ENCODE measurements at regions of chr11 and their contacts with region 1.

Region 1: DNA sequence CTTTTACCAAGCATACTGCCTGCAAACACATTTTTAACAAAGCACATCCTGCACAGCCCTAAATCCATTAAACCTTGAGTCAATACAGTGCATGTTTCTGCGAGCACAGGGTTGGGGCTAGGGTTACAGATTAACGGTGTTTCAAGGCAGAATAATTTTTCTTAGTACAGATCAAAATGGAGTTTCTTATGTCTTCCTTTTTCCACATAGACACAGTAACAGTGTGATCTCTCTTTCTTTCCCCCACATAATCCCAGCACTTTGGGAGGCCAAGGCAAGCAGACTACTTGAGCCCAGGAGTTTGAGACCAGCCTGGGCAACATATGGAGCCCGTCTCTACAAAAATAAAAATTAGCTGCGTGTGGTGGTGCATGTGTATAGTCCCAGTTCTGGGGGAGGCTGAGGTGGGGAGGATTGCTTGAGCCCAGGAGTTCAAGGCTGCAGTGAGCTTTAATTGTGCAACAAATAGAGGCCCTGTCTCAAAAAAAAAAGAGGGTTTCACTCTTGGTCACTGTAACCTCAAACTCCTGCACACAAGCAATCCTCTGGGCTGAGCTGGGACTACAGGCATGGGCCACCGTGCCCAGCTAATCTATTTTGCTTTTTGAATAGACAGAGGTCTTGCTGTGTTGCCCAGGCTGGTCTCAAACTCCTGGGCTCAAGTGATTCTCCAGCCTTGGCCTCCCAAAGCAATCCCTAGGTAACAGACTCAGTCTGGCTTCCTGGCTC is 19.7 kb upstream of the SLC3A2 start:
- DNase-seq: no peak
- ATAC-seq: peak; percentile 72
- H3K4me3 ChIP-seq: peak overlapping the region; percentile 28; the same call in 1 of the 2 replicates
- H3K27ac ChIP-seq: peak overlapping the region; percentile 61
- H3K4me1 ChIP-seq: peaks cover 23% of the 10 kb centered on the region
- H3K27me3 ChIP-seq: no peaks in the 10 kb centered on the region
- CTCF ChIP-seq: no peak
- EP300 ChIP-seq: no peak
- POLR2A ChIP-seq: no peak
- RAD21 ChIP-seq: no peak

Region 2: DNA sequence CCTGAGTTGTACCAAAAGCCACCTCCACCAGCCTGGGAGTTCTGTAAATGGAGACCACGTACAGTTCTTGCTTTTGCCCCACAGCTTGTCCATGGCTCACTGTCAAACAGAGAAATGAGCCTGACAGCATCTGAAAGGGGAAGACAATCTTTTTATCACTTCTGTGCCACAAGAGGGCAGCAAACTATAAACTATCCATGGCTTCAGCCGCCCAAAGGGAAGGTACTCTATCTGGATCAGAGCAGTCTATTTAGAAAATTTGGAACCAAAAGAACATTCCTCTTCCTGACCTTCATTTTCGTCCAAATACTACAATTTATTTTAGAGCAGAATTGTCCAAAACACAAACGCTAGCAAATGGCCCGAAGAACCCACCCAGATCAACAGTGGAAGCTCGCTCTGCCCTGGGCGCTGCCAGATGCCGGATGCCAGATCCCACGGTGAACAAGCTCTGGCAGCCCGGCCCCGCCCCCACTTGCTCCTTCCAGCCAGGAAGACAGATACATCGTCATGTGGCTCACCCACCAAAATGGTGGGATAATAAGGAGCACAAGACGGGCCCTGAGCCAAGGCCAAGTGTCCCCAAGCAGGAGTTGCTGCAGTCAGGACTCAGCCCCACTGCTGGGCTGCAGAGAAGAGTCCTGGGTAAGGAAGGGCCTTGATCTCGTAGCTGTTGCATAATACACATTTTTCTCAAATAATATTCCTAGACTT is 466.0 kb before region 1 on chr11:
- CTCF ChIA-PET with region 1: interaction called, 7 read pairs
- POLR2A ChIA-PET with region 1: no interaction called
- RAD21 ChIA-PET with region 1: no interaction called
- SMC1A ChIA-PET with region 1: interaction called, 7 read pairs
- in situ Hi-C with region 1: no loop called
- intact Hi-C with region 1: loop called (anchors 10 kb)
- DNase-seq: peak; percentile 28
- ATAC-seq: peak; percentile 97
- H3K4me3 ChIP-seq: no peak overlapping the region
- H3K27ac ChIP-seq: no peak overlapping the region
- H3K4me1 ChIP-seq: no peaks in the 10 kb centered on the region
- H3K27me3 ChIP-seq: no peaks in the 10 kb centered on the region
- CTCF ChIP-seq: peak; percentile 51 to 82 (median 68); a peak in 5 of 6 replicates
- EP300 ChIP-seq: no peak
- POLR2A ChIP-seq: no peak
- RAD21 ChIP-seq: peak; percentile 86

Region 3: GRCh38 chr11:62671575-62672389 is 189.2 kb before region 1 on chr11 and contains the starts of genes LBHD1 and UQCC3:
- CTCF ChIA-PET with region 1: interaction called, 3 read pairs
- POLR2A ChIA-PET with region 1: interaction called, 6 read pairs
- RAD21 ChIA-PET with region 1: no interaction called
- SMC1A ChIA-PET with region 1: interaction called, 4 read pairs
- in situ Hi-C with region 1: no loop called
- intact Hi-C with region 1: loop called (anchors 5 kb)
- DNase-seq: no peak
- ATAC-seq: peak; percentile 89
- H3K4me3 ChIP-seq: peak within 1 kb of the TSS; percentile 88
- H3K27ac ChIP-seq: peak within 1 kb of the TSS; percentile 75
- H3K4me1 ChIP-seq: peaks cover 19% of the 10 kb centered on the region
- H3K27me3 ChIP-seq: no peaks in the 10 kb centered on the region
- CTCF ChIP-seq: no peak
- EP300 ChIP-seq: no peak
- POLR2A ChIP-seq: peak; percentile 82
- RAD21 ChIP-seq: no peak
- polyA plus RNA-seq, gene LBHD1: 0.79 to 2.4 TPM
- polyA plus RNA-seq, gene UQCC3: 2.0 to 4.6 TPM

Region 4: DNA sequence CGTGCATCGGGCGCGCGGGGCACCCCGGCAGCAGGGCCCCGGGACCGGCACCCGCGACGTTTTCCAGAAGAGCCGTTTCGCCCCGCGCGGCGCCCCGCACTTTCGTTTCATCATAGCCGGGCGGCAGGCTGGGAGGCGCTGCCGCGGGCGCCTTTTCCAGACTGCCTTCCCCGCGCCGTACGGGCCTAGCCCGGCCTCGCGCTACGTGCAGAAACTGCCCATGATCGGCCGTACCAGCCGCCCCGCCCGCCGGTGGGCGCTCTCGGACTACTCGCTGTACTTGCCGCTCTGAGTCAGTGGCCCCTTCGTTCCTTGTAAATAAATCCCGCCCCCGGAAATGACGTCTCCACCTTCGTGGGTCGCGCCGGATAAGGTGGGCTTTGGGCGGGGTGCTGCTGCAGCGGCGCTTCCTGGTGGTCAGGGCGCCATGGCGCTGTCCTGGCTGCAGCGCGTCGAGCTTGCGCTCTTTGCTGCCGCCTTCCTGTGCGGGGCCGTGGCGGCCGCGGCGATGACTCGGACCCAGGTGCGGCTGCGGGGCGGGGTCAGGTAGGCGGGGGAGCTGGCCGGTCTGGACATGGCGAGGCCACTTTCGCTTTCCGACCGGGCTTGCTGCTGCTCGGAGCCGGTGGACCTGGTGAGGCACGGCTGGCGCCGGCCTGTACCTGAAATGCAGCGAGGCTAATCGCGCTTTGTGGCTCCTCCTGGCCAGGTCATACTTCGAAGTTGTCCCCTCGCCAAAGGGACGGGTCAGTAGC is 73.8 kb before region 1 on chr11 and contains the start of gene TMEM179B:
- CTCF ChIA-PET with region 1: interaction called, 131 read pairs
- POLR2A ChIA-PET with region 1: interaction called, 53 read pairs
- RAD21 ChIA-PET with region 1: interaction called, 57 read pairs
- SMC1A ChIA-PET with region 1: interaction called, 33 read pairs
- in situ Hi-C with region 1: no loop called
- intact Hi-C with region 1: loop called (anchors 1 kb)
- DNase-seq: peak; percentile 88
- ATAC-seq: peak; percentile 80
- H3K4me3 ChIP-seq: peak within 1 kb of the TSS; percentile 95
- H3K27ac ChIP-seq: peak within 1 kb of the TSS; percentile 64
- H3K4me1 ChIP-seq: peaks cover 7% of the 10 kb centered on the region
- H3K27me3 ChIP-seq: no peaks in the 10 kb centered on the region
- CTCF ChIP-seq: peak; percentile 65 to 75 (median 74)
- EP300 ChIP-seq: no peak
- POLR2A ChIP-seq: peak; percentile 99
- RAD21 ChIP-seq: peak; percentile 58
- polyA plus RNA-seq, gene TMEM179B: 57.8 to 62.8 TPM

Region 5: GRCh38 chr11:62875698-62876478 is 14.9 kb after region 1 on chr11:
- CTCF ChIA-PET with region 1: interaction called, 38 read pairs
- POLR2A ChIA-PET with region 1: interaction called, 41 read pairs
- RAD21 ChIA-PET with region 1: interaction called, 13 read pairs
- SMC1A ChIA-PET with region 1: interaction called, 8 read pairs
- in situ Hi-C with region 1: no loop called
- intact Hi-C with region 1: no loop called
- DNase-seq: no peak
- ATAC-seq: no peak
- H3K4me3 ChIP-seq: no peak overlapping the region
- H3K27ac ChIP-seq: no peak overlapping the region
- H3K4me1 ChIP-seq: peaks cover 12% of the 10 kb centered on the region
- H3K27me3 ChIP-seq: no peaks in the 10 kb centered on the region
- CTCF ChIP-seq: 0 out of 6 replicates have a peak, but pooled peaks of 1 of the 3 experiments have one; percentile 9
- EP300 ChIP-seq: no peak
- POLR2A ChIP-seq: no peak
- RAD21 ChIP-seq: no peak

Region 6: GRCh38 chr11:62896049-62896448 is 35.0 kb after region 1 on chr11:
- CTCF ChIA-PET with region 1: no interaction called
- POLR2A ChIA-PET with region 1: no interaction called
- RAD21 ChIA-PET with region 1: no interaction called
- SMC1A ChIA-PET with region 1: no interaction called
- in situ Hi-C with region 1: no loop called
- intact Hi-C with region 1: no loop called
- DNase-seq: no peak
- ATAC-seq: no peak
- H3K4me3 ChIP-seq: no peak overlapping the region
- H3K27ac ChIP-seq: no peak overlapping the region
- H3K4me1 ChIP-seq: no peaks in the 10 kb centered on the region
- H3K27me3 ChIP-seq: no peaks in the 10 kb centered on the region
- CTCF ChIP-seq: no peak
- EP300 ChIP-seq: no peak
- POLR2A ChIP-seq: no peak
- RAD21 ChIP-seq: no peak

Measured in GM12878 (cell line).